ENCODE measurements at regions of chr6 and their contacts with region 1.

Region 1: GRCh38 chr6:127464881-127465459 is 5.8 kb upstream of the KIAA0408 start:
- DNase-seq: peak; percentile 55 to 58
- ATAC-seq: peak; percentile 98
- H3K4me3 ChIP-seq: no peak overlapping the region
- H3K27ac ChIP-seq: no peak overlapping the region
- H3K4me1 ChIP-seq: no peaks in the 10 kb centered on the region
- CTCF ChIP-seq: peak; percentile 76
- EP300 ChIP-seq: no peak
- POLR2A ChIP-seq: no peak
- RAD21 ChIP-seq: peak; percentile 78 to 85

Region 2: GRCh38 chr6:127366281-127367022 is 98.5 kb before region 1 on chr6:
- CTCF ChIA-PET with region 1: no interaction called
- POLR2A ChIA-PET with region 1: no interaction called
- DNase-seq: peak; percentile 89 to 92
- ATAC-seq: peak; percentile 99
- H3K4me3 ChIP-seq: no peak overlapping the region
- H3K27ac ChIP-seq: peak overlapping the region; percentile 74 to 90
- H3K4me1 ChIP-seq: peaks cover 14% of the 10 kb centered on the region; the same call in 2 of the 3 replicates
- CTCF ChIP-seq: no peak
- EP300 ChIP-seq: 0 out of 5 replicates have a peak, but pooled peaks of 1 of the 2 experiments have one; percentile 40
- POLR2A ChIP-seq: no peak
- RAD21 ChIP-seq: no peak

Region 3: DNA sequence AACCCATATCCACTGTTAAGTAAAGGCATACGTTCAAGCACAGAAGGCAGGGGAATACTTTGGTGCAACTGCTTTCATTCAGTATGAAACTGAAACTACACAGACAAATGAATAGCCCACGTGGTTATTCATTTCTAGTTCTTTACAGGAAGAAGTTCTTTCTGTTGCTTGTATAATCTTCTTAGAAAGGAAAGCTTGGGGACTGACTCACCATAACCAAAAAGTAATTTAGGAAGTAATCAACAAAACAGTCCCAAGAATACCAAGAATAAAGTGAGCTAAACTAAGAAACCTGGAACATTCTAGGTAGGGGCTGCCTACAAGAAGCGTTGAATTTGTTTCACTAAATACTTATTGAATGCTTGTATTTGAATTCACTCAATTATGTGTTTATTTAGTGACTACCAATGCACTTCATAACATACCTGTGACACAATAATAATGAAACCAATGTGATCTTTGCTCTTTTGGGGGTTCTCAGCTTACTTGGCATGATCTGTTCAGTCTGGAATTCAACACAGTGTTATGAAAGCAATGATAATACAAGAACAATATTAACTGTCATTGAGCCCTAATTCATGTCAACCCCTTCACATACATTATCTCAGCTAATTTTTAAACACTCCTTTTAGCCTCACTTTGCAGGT is 19.4 kb after region 1 on chr6:
- CTCF ChIA-PET with region 1: interaction called, 12 read pairs
- POLR2A ChIA-PET with region 1: no interaction called
- DNase-seq: peak; percentile 2 to 23
- ATAC-seq: peak; percentile 68 to 79
- H3K4me3 ChIP-seq: 0 out of 3 replicates have a peak overlapping the region, but pooled peaks have one; percentile 16
- H3K27ac ChIP-seq: peak overlapping the region; percentile 9 to 69; a peak in 4 of 6 replicates
- H3K4me1 ChIP-seq: peaks cover 44% of the 10 kb centered on the region
- CTCF ChIP-seq: no peak
- EP300 ChIP-seq: no peak
- POLR2A ChIP-seq: no peak
- RAD21 ChIP-seq: no peak

Region 4: GRCh38 chr6:127503022-127503421 is 38.1 kb after region 1 on chr6:
- CTCF ChIA-PET with region 1: no interaction called
- POLR2A ChIA-PET with region 1: no interaction called
- DNase-seq: no peak
- ATAC-seq: no peak; a peak in 1 of 6 replicates
- H3K4me3 ChIP-seq: no peak overlapping the region
- H3K27ac ChIP-seq: no peak overlapping the region
- H3K4me1 ChIP-seq: no peaks in the 10 kb centered on the region
- CTCF ChIP-seq: no peak
- EP300 ChIP-seq: no peak
- POLR2A ChIP-seq: no peak
- RAD21 ChIP-seq: no peak

Region 5: GRCh38 chr6:127539272-127539671 is 74.3 kb after region 1 on chr6:
- CTCF ChIA-PET with region 1: interaction called, 49 read pairs
- POLR2A ChIA-PET with region 1: no interaction called
- DNase-seq: no peak
- ATAC-seq: peak; percentile 56 to 75; a peak in 4 of 6 replicates
- H3K4me3 ChIP-seq: no peak overlapping the region
- H3K27ac ChIP-seq: no peak overlapping the region
- H3K4me1 ChIP-seq: 0 out of 3 replicates have a peak, but pooled peaks cover 3% of the 10 kb centered on the region
- CTCF ChIP-seq: peak; percentile 62
- EP300 ChIP-seq: no peak
- POLR2A ChIP-seq: no peak
- RAD21 ChIP-seq: peak; percentile 62 to 79